T-cell (primary cell): ENCODE measurements at regions of chr3 and their contacts with region 1.

Region 1: GRCh38 chr3:162390891-162391290 is 894.3 kb downstream of the OTOL1 start:
- DNase-seq: no peak
- ATAC-seq: no peak
- H3K4me3 ChIP-seq: no peak overlapping the region
- H3K4me3 Mint-ChIP-seq: no peak overlapping the region
- H3K27ac ChIP-seq: no peak overlapping the region
- H3K27ac Mint-ChIP-seq: no peak overlapping the region
- H3K4me1 ChIP-seq: no peaks in the 10 kb centered on the region
- H3K4me1 Mint-ChIP-seq: no peaks in the 10 kb centered on the region
- H3K27me3 ChIP-seq: no peaks in the 10 kb centered on the region
- H3K27me3 Mint-ChIP-seq: no peaks in the 10 kb centered on the region

Region 2: DNA sequence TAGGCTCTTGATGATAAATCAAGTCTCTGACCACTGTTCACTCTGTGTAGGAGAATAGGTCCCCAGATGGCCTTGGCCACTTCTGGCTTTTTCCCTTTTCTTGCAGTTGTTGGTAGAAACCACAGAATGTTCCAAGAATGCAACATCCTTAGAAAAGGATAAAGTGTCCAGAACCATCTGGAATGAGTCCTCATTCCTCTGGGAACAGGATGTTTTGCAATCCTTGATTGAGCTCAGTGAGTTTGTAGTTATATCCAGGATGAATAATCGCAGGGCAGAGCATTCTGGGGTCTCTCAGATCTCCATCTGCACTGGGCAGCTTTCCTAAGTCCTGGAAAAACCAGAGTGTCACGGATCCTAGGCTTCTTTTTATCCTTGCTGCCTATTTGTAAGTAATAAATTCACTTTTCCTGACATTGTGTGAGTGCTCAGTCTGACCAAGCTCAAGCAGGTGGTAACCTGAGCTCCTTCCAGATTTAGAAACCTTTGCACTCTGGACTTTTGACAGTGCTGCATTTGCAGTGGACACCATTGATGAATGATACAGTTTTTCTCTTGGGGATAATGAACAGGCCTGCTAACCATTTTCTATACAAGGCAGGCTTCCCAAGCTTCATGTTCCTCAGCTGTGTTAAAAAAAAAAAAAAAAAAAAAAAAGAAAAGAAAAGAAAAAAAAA is 134.3 kb after region 1 on chr3:
- CTCF ChIA-PET with region 1: no interaction called
- POLR2A ChIA-PET with region 1: interaction called in 1 of 2 experiments, 25 read pairs
- DNase-seq: no peak
- ATAC-seq: no peak
- H3K4me3 ChIP-seq: no peak overlapping the region
- H3K4me3 Mint-ChIP-seq: no peak overlapping the region
- H3K27ac ChIP-seq: no peak overlapping the region
- H3K27ac Mint-ChIP-seq: no peak overlapping the region
- H3K4me1 ChIP-seq: no peaks in the 10 kb centered on the region
- H3K4me1 Mint-ChIP-seq: no peaks in the 10 kb centered on the region
- H3K27me3 ChIP-seq: no peaks in the 10 kb centered on the region
- H3K27me3 Mint-ChIP-seq: no peaks in the 10 kb centered on the region